ENCODE measurements at regions of chr1 and their contacts with region 1.

Region 1: GRCh38 chr1:58783993-58784757 is at the start of gene JUN:
- ATAC-seq: peak; percentile 59 to 82 (median 78)
- H3K4me3 ChIP-seq: peak within 1 kb of the TSS; percentile 63 to 97 (median 78)
- H3K27ac ChIP-seq: peak within 1 kb of the TSS; percentile 89 to 91
- H3K4me1 ChIP-seq: peaks cover 7 to 11% of the 10 kb centered on the region in 2 donors
- total RNA-seq, gene JUN: 17.0 to 165 (median 66.9) TPM

Region 2: DNA sequence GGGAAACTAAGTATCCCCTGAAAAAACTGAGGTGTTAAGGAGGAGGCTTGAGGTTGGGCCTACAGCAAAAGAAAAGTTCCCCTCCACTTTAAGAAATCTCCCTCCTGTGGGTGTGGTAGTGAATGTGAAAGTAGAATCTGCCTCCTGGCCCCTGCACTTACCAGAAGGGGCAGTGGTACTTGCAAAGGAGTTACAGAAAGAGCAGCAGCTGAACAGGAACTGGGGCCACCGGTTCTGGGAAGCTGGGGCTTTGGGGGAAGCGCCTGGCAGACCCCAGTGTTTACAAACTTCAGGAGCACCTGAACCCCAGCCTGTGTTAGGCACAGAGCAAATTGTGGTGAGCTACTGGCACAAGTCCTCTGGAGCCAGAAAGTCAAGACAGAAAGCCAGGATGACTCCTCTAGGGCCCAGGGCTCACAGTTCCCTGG is 262.6 kb after region 1 on chr1:
- in situ Hi-C with region 1: loop called in 1 of 9 experiments (anchors 25 kb)
- ATAC-seq: peak in 3 of 8 experiments; percentile 54 to 88 (median 77)
- H3K4me3 ChIP-seq: no peak overlapping the region
- H3K27ac ChIP-seq: no peak overlapping the region
- H3K4me1 ChIP-seq: no peaks in the 10 kb centered on the region

Region 3: GRCh38 chr1:59296358-59297256 is 512.4 kb after region 1 on chr1 and contains the start of gene FGGY:
- in situ Hi-C with region 1: loop called in 1 of 9 experiments (anchors 25 kb)
- ATAC-seq: peak; percentile 90 to 96 (median 94)
- H3K4me3 ChIP-seq: peak within 1 kb of the TSS; percentile 45 to 55 (median 48)
- H3K27ac ChIP-seq: peak within 1 kb of the TSS; percentile 90
- H3K4me1 ChIP-seq: peaks cover 15 to 17% of the 10 kb centered on the region in 2 donors
- total RNA-seq, gene FGGY: 8.4 to 33.0 (median 18.6) TPM

Region 4: GRCh38 chr1:59699227-59699847 is 915.2 kb after region 1 on chr1:
- in situ Hi-C with region 1: loop called in 2 of 9 experiments (anchors 25 kb)
- ATAC-seq: peak in 5 of 8 experiments; percentile 33 to 44 (median 42)
- H3K4me3 ChIP-seq: no peak overlapping the region
- H3K27ac ChIP-seq: no peak overlapping the region
- H3K4me1 ChIP-seq: peaks cover 21 to 22% of the 10 kb centered on the region in 2 donors

Measured in motor neuron (in vitro differentiated cells).